A549 (cell line): ENCODE measurements at regions of chr15 and their contacts with region 1.

Region 1: DNA sequence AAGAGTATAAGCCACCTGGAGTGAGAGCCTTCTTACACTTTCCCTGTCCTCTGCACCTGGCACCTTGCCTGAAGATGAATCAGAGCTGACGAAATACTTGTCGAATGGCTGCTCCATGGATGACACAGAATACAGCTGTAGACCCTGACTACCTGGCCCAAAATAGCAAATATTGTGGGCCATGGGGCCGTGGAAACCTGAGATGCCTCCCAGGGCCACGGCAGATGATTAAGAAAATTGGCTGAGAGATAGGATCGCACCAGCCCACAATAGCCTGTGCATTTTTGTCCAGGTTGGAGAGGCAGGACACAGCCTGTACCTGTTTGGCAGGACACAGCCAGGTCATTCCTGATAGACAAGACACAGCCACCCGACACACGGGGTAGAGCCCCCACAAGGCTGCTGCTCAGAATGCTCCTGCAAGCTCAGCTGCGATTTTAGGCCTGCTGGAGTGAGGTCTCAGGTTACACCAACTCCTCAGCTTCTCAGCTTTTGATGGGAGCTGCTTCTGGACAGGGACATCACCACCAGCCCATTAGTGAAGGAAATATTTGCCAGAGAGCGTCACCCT is 22.9 kb upstream of the TPM1 start:
- DNase-seq: peak; percentile 76 to 85
- ATAC-seq: peak; percentile 78 to 82
- H3K4me3 ChIP-seq: no peak overlapping the region
- H3K27ac ChIP-seq: peak overlapping the region; percentile 59 to 85
- H3K4me1 ChIP-seq: peaks cover 66% of the 10 kb centered on the region
- CTCF ChIP-seq: no peak
- EP300 ChIP-seq: peak in 1 of 2 experiments; percentile 23; a peak in 1 of 5 replicates
- POLR2A ChIP-seq: no peak
- RAD21 ChIP-seq: peak in 1 of 2 experiments; percentile 30; a peak in 1 of 5 replicates

Region 2: DNA sequence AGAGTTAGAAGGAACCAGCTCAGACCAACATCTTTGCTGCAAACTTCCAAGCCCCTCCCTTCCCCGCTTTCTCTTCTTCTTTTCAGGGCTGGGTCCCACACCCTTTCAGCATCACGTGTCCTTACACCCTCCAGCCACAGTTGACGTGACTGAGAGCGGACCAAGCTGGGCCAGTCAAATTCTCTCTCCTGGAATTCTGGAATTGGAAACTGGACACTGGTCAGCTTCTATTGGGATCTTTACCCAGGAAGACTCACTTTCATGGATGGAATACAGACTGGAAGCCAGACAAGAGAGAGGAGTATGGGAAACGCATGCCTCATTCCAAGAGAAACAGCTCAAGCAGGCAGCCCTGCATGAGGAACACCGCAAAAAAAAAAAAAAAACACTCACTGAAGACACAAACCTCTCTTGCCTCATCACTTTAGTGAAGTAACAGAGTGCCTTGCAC is 10.5 kb after region 1 on chr15:
- CTCF ChIA-PET with region 1: interaction called, 14 read pairs
- POLR2A ChIA-PET with region 1: no interaction called
- DNase-seq: no peak
- ATAC-seq: no peak
- H3K4me3 ChIP-seq: no peak overlapping the region
- H3K27ac ChIP-seq: 0 out of 6 replicates have a peak overlapping the region, but pooled peaks of 1 of the 2 experiments have one; percentile 3
- H3K4me1 ChIP-seq: no peaks in the 10 kb centered on the region
- CTCF ChIP-seq: no peak
- EP300 ChIP-seq: no peak
- POLR2A ChIP-seq: no peak
- RAD21 ChIP-seq: no peak